ENCODE measurements at regions of chr14 and their contacts with region 1.

Region 1: GRCh38 chr14:92456215-92457015 is 57.2 kb upstream of the RIN3 start:
- DNase-seq: peak; percentile 66 to 80 (median 72)
- ATAC-seq: peak; percentile 28 to 82 (median 62)
- H3K4me3 ChIP-seq: peak overlapping the region in 1 of 12 donors; percentile 26
- H3K27ac ChIP-seq: peak overlapping the region in 2 of 12 donors; percentile 3 to 13
- H3K4me1 ChIP-seq: peaks cover 6 to 35% (median 19%) of the 10 kb centered on the region in 12 donors
- H3K27me3 ChIP-seq: no peaks in the 10 kb centered on the region
- CTCF ChIP-seq: peak; percentile 66 to 87 (median 78)
- POLR2A ChIP-seq: no peak

Region 2: GRCh38 chr14:92121670-92122350 is 334.6 kb before region 1 on chr14 and contains the starts of genes CPSF2 and NDUFB1:
- intact Hi-C with region 1: loop called in 4 of 10 experiments (anchors 5 to 10 kb)
- DNase-seq: peak; percentile 88 to 91 (median 90)
- ATAC-seq: peak; percentile 91 to 95 (median 94)
- H3K4me3 ChIP-seq: peak within 1 kb of the TSS; percentile 59 to 97 (median 86)
- H3K27ac ChIP-seq: peak within 1 kb of the TSS; percentile 91 to 99 (median 96)
- H3K4me1 ChIP-seq: peaks cover 0 to 62% (median 33%) of the 10 kb centered on the region in 12 donors
- H3K27me3 ChIP-seq: no peaks in the 10 kb centered on the region
- CTCF ChIP-seq: peak in 1 of 12 donors; percentile 17
- POLR2A ChIP-seq: peak in 1 of 2 donors; percentile 57
- total RNA-seq, gene CPSF2: 24.5 to 51.7 (median 44.2) TPM
- total RNA-seq, gene NDUFB1: 295 to 1,551 (median 438) TPM

Region 3: DNA sequence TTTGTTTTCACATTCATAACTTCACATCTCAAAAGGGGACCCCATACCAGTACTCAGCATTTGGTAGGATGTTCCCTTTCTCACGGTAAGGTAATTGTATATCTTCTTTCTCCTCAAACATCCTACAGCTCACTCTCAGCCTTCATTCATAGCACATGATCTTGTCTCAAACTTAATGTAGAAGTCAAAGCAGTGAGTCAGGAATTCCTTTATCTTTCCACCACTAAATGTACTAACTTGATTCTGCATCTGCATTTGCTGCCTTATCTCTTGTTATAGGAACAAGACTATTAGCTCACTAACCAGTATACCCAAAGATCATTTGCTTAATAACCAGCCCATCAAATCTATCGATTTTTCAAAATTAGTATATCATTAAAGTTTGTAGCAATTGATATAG is 311.7 kb before region 1 on chr14:
- intact Hi-C with region 1: loop called in 6 of 10 experiments (anchors 5 to 10 kb)
- DNase-seq: no peak
- ATAC-seq: no peak
- H3K4me3 ChIP-seq: no peak overlapping the region
- H3K27ac ChIP-seq: no peak overlapping the region
- H3K4me1 ChIP-seq: no peaks in the 10 kb centered on the region
- H3K27me3 ChIP-seq: no peaks in the 10 kb centered on the region
- CTCF ChIP-seq: no peak
- POLR2A ChIP-seq: no peak

Region 4: DNA sequence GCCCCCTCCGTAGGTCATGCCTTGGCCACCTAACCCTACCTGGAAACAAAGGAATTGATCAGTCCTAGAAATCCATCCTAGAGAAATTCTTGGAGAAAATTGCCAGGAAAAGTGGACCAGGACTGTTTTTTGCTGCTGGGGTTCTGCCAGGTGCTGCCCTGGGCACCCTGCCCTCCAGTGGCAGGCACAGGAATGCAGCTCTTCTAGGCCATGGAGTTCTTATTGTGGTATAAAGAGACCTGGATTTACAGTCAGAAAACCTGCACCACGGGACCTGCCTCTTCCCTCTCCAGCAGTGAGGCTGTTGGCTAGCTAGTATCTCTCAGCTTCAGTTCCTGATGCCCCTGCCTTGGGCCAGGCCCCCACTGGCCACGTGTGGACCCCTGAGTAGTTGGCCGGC is 73.7 kb before region 1 on chr14:
- intact Hi-C with region 1: no loop called
- DNase-seq: no peak
- ATAC-seq: peak in 1 of 4 donors; percentile 39
- H3K4me3 ChIP-seq: no peak overlapping the region
- H3K27ac ChIP-seq: no peak overlapping the region
- H3K4me1 ChIP-seq: peaks cover 0 to 6% (median 0%) of the 10 kb centered on the region in 12 donors
- H3K27me3 ChIP-seq: peaks cover 0 to 4% (median 0%) of the 10 kb centered on the region in 9 donors
- CTCF ChIP-seq: peak in 11 of 12 donors; percentile 15 to 47 (median 31)
- POLR2A ChIP-seq: no peak

Region 5: DNA sequence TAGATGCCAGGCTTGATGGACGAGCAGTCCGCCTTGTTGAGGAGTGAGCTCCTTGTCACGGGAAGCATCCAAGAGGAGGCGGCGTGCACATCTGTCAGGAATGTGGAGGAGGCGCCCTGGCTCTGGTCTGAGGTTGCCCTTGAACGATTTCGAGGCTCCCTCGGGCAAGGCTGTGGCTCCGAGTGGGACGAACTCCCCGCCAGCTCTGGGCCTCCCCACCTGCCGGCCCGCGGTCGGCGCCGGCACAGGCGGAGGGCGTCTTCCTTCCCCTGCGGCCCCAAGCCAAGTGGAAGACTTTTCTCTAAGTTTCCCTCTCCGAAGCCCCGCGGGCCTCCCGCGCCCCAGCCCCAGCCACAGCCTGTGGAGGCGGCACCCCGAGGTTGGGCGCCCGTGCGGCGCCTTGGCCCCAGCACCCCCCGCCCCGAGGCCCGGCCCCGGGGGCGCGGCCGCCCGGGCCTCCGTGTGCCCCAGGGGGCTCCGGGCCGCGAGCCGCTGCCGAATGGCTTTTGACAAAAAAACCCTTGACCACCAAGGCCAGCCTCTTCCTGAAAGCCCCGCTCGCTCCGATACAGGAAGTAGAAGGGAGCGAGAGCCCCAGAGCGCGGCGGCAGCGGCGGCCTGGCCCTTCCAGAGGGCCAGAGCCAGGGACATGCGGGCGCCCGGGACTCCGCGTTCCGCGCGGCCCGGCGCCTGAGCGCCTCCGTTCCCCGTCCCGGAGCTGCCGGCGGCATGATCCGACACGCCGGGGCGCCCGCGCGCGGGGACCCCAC is 57.0 kb after region 1 on chr14 and contains the start of gene RIN3:
- intact Hi-C with region 1: loop called in 3 of 10 experiments (anchors 1 to 5 kb)
- DNase-seq: peak; percentile 69 to 88 (median 77)
- ATAC-seq: peak in 3 of 4 donors; percentile 56 to 73 (median 71)
- H3K4me3 ChIP-seq: peak within 1 kb of the TSS; percentile 65 to 94 (median 78)
- H3K27ac ChIP-seq: peak within 1 kb of the TSS; percentile 80 to 95 (median 87)
- H3K4me1 ChIP-seq: peaks cover 0 to 72% (median 25%) of the 10 kb centered on the region in 12 donors
- H3K27me3 ChIP-seq: no peaks in the 10 kb centered on the region
- CTCF ChIP-seq: no peak
- POLR2A ChIP-seq: peak in 1 of 2 donors; percentile 37
- total RNA-seq, gene RIN3: 9.7 to 37.0 (median 14.6) TPM

Region 6: GRCh38 chr14:92551044-92551841 is 94.8 kb after region 1 on chr14:
- intact Hi-C with region 1: loop called in 5 of 10 experiments (anchors 2 to 10 kb)
- DNase-seq: no peak
- ATAC-seq: no peak
- H3K4me3 ChIP-seq: no peak overlapping the region
- H3K27ac ChIP-seq: peak overlapping the region in 2 of 12 donors; percentile 9 to 88
- H3K4me1 ChIP-seq: peaks cover 0 to 76% (median 27%) of the 10 kb centered on the region in 12 donors
- H3K27me3 ChIP-seq: no peaks in the 10 kb centered on the region
- CTCF ChIP-seq: no peak
- POLR2A ChIP-seq: no peak

Region 7: GRCh38 chr14:92680781-92681650 is 224.6 kb after region 1 on chr14:
- intact Hi-C with region 1: loop called in 7 of 10 experiments (anchors 5 to 10 kb)
- DNase-seq: peak; percentile 64 to 86 (median 72)
- ATAC-seq: peak; percentile 27 to 73 (median 64)
- H3K4me3 ChIP-seq: no peak overlapping the region
- H3K27ac ChIP-seq: peak overlapping the region in 1 of 12 donors; percentile 64
- H3K4me1 ChIP-seq: peaks cover 0 to 25% (median 5%) of the 10 kb centered on the region in 12 donors
- H3K27me3 ChIP-seq: no peaks in the 10 kb centered on the region
- CTCF ChIP-seq: peak; percentile 82 to 93 (median 89)
- POLR2A ChIP-seq: no peak

Region 8: DNA sequence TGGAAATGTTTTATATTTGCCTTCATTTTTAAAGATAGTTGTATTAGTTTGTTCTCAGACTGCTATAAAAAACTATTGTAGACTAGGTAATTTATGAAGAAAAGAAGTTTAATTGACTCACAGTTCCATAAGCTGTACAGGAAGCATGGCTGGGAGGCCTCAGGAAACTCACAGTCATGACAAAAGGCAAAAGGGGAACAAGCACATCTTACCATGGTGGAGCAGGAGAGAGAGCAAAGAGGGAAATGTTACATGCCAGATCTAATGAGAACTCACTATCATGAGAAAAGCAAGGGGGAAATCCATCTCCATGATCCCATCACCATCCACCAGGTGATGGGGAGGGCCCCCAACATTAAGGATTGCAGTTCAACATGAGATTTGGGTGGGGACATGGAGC is 938.8 kb after region 1 on chr14:
- intact Hi-C with region 1: no loop called
- DNase-seq: no peak
- ATAC-seq: no peak
- H3K4me3 ChIP-seq: no peak overlapping the region
- H3K27ac ChIP-seq: no peak overlapping the region
- H3K4me1 ChIP-seq: no peaks in the 10 kb centered on the region
- H3K27me3 ChIP-seq: peaks cover 0 to 6% (median 0%) of the 10 kb centered on the region in 9 donors
- CTCF ChIP-seq: no peak
- POLR2A ChIP-seq: no peak